ENCODE measurements at regions of chr19 and their contacts with region 1.

Region 1: DNA sequence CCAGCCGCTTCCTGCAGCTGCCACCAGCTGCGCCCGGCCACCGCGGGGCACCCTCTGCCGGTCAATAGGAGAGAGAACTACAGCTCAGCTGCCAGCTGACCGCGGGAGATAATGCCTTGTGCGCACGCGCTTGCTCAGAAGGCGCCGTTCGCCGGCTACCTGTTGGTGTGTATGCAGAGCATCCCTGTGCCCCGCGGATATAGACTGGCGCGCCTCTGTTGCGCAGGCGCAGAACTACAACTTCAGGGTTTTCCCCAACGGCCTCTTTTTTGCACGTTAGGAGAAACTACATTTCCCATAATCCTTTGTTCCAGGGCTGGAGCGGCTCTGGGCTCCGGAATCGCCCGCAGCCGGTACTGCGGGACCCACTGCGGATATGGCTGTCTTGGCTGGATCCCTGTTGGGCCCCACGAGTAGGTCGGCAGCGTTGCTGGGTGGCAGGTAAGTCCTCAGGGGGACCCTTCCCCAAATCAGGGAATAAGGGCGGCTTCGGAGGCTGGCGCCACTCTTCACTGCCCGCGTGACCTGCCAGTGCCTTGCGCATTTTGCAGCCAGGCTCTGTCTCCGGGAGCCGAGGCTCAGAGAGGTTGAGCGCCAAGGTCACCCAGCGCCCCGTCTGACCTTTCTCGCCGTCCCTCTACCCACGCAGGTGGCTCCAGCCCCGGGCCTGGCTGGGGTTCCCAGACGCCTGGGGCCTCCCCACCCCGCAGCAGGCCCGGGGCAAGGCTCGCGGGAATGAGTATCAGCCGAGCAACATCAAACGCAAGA is at the start of gene MRPL34:
- DNase-seq: peak; percentile 99
- H3K4me3 ChIP-seq: peak within 1 kb of the TSS; percentile 67 to 78 (median 72)
- H3K27ac ChIP-seq: peak within 1 kb of the TSS; percentile 92 to 97 (median 94)
- H3K4me1 ChIP-seq: peaks cover 0 to 75% (median 66%) of the 10 kb centered on the region in 4 donors
- H3K27me3 ChIP-seq: no peaks in the 10 kb centered on the region
- CTCF ChIP-seq: peak; percentile 71 to 93 (median 84)
- EP300 ChIP-seq: peak in 1 of 4 donors; percentile 4
- POLR2A ChIP-seq: peak; percentile 53 to 59
- total RNA-seq, gene MRPL34: 174 to 390 (median 267) TPM

Region 2: GRCh38 chr19:17336872-17337722 is 31.4 kb after region 1 on chr19 and contains the start of gene GTPBP3:
- intact Hi-C with region 1: loop called (anchors 2 kb)
- DNase-seq: peak; percentile 99
- H3K4me3 ChIP-seq: peak within 1 kb of the TSS; percentile 52 to 81 (median 66)
- H3K27ac ChIP-seq: peak within 1 kb of the TSS; percentile 83 to 96 (median 90)
- H3K4me1 ChIP-seq: peaks cover 0 to 45% (median 38%) of the 10 kb centered on the region in 4 donors
- H3K27me3 ChIP-seq: peaks cover 0 to 9% (median 0%) of the 10 kb centered on the region in 3 donors
- CTCF ChIP-seq: no peak
- EP300 ChIP-seq: no peak
- POLR2A ChIP-seq: peak in 1 of 2 donors; percentile 16
- total RNA-seq, gene GTPBP3: 4.6 to 22.2 (median 15.4) TPM